HEK293 (cell line): ENCODE measurements at regions of chr10 and their contacts with region 1.

Region 1: GRCh38 chr10:37754538-37755323 is 102.7 kb downstream of the ZNF248 start:
- H3K4me3 ChIP-seq: no peak overlapping the region
- H3K27ac ChIP-seq: no peak overlapping the region
- H3K4me1 ChIP-seq: no peaks in the 10 kb centered on the region
- CTCF ChIP-seq: peak; percentile 14; the same call in 1 of the 2 replicates

Region 2: DNA sequence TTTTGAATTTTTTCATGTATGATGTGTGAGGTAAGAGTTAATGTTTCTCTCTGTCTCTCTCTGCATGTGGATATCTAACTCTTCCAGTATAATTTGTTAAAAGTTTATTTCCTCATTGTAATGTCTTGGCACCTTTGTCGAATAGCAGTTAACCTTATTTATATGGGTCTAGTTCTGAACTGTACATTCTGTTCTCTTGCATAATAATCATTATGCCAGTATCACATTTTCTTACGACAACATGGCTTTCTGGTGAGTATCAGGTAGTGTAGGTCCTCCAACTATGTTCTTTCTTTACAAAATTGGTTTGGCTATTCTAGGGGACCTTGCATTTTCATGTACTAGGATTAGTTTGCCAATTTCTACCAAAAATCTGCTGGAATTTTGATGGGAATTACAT is 1775.6 kb before region 1 on chr10:
- CTCF ChIA-PET with region 1: no interaction called
- POLR2A ChIA-PET with region 1: no interaction called
- H3K4me3 ChIP-seq: no peak overlapping the region
- H3K27ac ChIP-seq: no peak overlapping the region
- H3K4me1 ChIP-seq: no peaks in the 10 kb centered on the region
- CTCF ChIP-seq: no peak

Region 3: GRCh38 chr10:37434091-37434490 is 320.6 kb before region 1 on chr10:
- CTCF ChIA-PET with region 1: interaction called, 10 read pairs
- POLR2A ChIA-PET with region 1: no interaction called
- H3K4me3 ChIP-seq: no peak overlapping the region
- H3K27ac ChIP-seq: no peak overlapping the region
- H3K4me1 ChIP-seq: no peaks in the 10 kb centered on the region
- CTCF ChIP-seq: no peak

Region 4: DNA sequence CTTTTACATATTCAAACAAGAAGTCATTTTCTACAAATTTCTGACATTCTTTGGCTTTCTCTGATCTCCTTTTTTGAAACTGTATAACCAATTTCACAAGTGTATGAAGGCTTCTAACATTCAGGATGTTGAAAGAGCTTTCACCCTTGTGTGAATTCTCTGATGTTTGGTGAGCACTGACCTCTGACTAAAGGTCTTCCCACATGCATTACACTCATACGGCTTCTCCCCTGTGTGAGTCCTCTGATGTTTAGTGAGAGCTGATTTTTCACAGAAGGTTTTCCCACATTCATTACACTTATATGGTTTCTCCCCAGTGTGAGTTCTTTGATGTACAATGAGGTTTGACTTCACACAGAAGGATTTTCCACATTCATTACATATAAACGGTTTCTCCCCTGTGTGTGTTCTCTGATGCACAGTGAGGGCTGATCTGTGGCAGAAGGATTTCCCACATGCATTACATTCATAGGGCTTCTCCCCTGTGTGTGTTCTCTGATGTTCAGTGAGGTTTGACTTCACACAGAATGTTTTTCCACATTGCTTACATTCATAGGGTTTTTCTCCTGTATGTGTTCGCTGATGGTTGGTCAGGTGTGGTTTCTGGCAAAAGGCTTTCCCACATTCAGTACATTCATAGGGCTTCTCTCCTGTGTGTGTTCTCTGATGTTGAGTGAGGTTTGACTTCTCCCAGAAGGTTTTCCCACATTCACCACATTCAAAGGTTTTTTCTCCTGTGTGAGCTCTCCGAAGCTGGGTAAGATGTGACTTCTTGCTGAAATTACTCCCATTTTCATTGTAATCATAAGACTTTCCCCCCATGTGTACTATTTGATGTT is 77.0 kb after region 1 on chr10:
- CTCF ChIA-PET with region 1: no interaction called
- POLR2A ChIA-PET with region 1: no interaction called
- H3K4me3 ChIP-seq: no peak overlapping the region
- H3K27ac ChIP-seq: no peak overlapping the region
- H3K4me1 ChIP-seq: no peaks in the 10 kb centered on the region
- CTCF ChIP-seq: no peak